ENCODE measurements at regions of chrX and their contacts with region 1.

Region 1: GRCh38 chrX:106742805-106743204 is 16.3 kb downstream of the RNF128 start:
- DNase-seq: no peak
- H3K4me3 ChIP-seq: no peak overlapping the region
- H3K4me3 Mint-ChIP-seq: no peak overlapping the region
- H3K27ac Mint-ChIP-seq: no peak overlapping the region
- H3K4me1 ChIP-seq: peaks cover 19% of the 10 kb centered on the region
- H3K4me1 Mint-ChIP-seq: no peaks in the 10 kb centered on the region
- H3K27me3 ChIP-seq: no peaks in the 10 kb centered on the region
- H3K27me3 Mint-ChIP-seq: no peaks in the 10 kb centered on the region
- CTCF ChIP-seq: no peak

Region 2: GRCh38 chrX:106716004-106716403 is 26.8 kb before region 1 on chrX:
- CTCF ChIA-PET with region 1: no interaction called
- POLR2A ChIA-PET with region 1: no interaction called
- intact Hi-C with region 1: loop called (anchors 1 kb)
- DNase-seq: peak; percentile 43 to 45
- H3K4me3 ChIP-seq: no peak overlapping the region
- H3K4me3 Mint-ChIP-seq: peak overlapping the region; percentile 60
- H3K27ac Mint-ChIP-seq: peak overlapping the region; percentile 90
- H3K4me1 ChIP-seq: peaks cover 37% of the 10 kb centered on the region
- H3K4me1 Mint-ChIP-seq: peaks cover 20% of the 10 kb centered on the region
- H3K27me3 ChIP-seq: no peaks in the 10 kb centered on the region
- H3K27me3 Mint-ChIP-seq: no peaks in the 10 kb centered on the region
- CTCF ChIP-seq: no peak

Region 3: DNA sequence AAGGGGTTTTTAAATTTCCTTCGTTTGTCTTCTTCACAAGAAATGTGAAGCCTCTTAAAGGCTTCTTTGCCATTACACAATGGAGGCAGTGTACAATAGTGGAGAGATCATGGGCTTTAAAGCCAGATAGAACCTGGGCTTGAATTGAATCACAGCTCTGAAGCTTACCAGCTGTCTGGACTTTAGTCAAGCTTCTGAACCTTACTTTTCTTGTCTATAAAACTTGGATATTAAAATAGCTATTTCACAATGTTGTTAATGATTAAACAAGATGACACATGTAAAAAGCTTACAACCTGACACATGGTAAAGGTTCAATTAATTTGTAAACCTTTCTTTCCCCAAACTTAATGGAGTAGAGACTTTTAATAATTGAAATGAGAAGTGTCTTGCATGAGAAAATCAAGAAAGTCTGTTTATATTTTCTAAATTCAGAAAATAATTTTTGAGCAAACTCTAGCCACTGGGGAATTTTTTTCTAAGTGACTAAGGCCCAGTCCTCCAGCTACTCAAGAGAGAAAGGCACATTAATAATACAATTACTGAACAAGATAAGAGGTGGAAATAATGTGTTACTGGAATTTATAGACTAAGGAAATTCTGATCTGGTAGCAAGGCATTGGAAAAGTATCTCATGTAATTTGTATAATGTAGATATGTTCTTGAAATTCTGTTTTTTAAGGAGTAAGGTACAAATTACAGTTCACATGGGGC is 38.0 kb after region 1 on chrX:
- CTCF ChIA-PET with region 1: no interaction called
- POLR2A ChIA-PET with region 1: interaction called, 3 read pairs
- intact Hi-C with region 1: loop called (anchors 2 kb)
- DNase-seq: peak; percentile 35
- H3K4me3 ChIP-seq: no peak overlapping the region
- H3K4me3 Mint-ChIP-seq: peak overlapping the region; percentile 27
- H3K27ac Mint-ChIP-seq: no peak overlapping the region
- H3K4me1 ChIP-seq: peaks cover 25% of the 10 kb centered on the region
- H3K4me1 Mint-ChIP-seq: peaks cover 12% of the 10 kb centered on the region
- H3K27me3 ChIP-seq: no peaks in the 10 kb centered on the region
- H3K27me3 Mint-ChIP-seq: no peaks in the 10 kb centered on the region
- CTCF ChIP-seq: no peak

Region 4: GRCh38 chrX:106973433-106974149 is 230.8 kb after region 1 on chrX:
- CTCF ChIA-PET with region 1: no interaction called
- POLR2A ChIA-PET with region 1: no interaction called
- intact Hi-C with region 1: no loop called
- DNase-seq: no peak
- H3K4me3 ChIP-seq: no peak overlapping the region
- H3K4me3 Mint-ChIP-seq: no peak overlapping the region
- H3K27ac Mint-ChIP-seq: peak overlapping the region; percentile 19
- H3K4me1 ChIP-seq: peaks cover 12% of the 10 kb centered on the region; the same call in 1 of the 2 replicates
- H3K4me1 Mint-ChIP-seq: peaks cover 16% of the 10 kb centered on the region
- H3K27me3 ChIP-seq: no peaks in the 10 kb centered on the region
- H3K27me3 Mint-ChIP-seq: no peaks in the 10 kb centered on the region
- CTCF ChIP-seq: no peak